Right lobe of liver (tissue), 6 donors: ENCODE measurements at regions of chrX and their contacts with region 1.

Region 1: GRCh38 chrX:12946838-12947544 is 27.9 kb upstream of the TMSB4X start:
- DNase-seq: peak in 2 of 3 donors; percentile 57 to 66
- ATAC-seq: peak; percentile 83 to 91 (median 87)
- H3K4me3 ChIP-seq: no peak overlapping the region
- H3K27ac ChIP-seq: peak overlapping the region in 1 of 3 donors; percentile 1
- H3K4me1 ChIP-seq: peaks cover 0 to 15% (median 6%) of the 10 kb centered on the region in 4 donors
- H3K27me3 ChIP-seq: no peaks in the 10 kb centered on the region
- CTCF ChIP-seq: peak; percentile 94 to 99 (median 96)
- POLR2A ChIP-seq: no peak

Region 2: DNA sequence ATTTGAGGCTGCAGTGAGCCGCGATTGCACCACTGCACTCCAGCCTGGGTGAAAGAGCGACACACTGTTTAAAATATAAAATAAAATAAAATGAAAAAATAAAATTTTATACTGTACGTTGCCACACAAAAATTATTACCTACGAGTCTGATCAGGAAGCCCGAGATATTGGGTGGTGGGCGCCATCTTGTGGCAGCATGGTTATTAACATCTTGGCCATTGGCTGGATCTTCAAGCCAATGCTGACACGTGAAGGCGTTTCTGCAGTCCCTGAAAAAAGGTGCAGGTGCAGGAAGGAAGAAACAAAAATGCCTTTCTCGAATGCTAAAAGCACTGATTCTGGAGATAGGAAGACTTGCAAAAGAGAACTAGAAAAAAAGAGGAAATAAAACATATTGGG is 45.5 kb before region 1 on chrX:
- intact Hi-C with region 1: no loop called
- DNase-seq: peak in 2 of 3 donors; percentile 47 to 62
- ATAC-seq: peak; percentile 72 to 82 (median 76)
- H3K4me3 ChIP-seq: no peak overlapping the region
- H3K27ac ChIP-seq: no peak overlapping the region
- H3K4me1 ChIP-seq: no peaks in the 10 kb centered on the region
- H3K27me3 ChIP-seq: no peaks in the 10 kb centered on the region
- CTCF ChIP-seq: peak; percentile 51 to 80 (median 77)
- POLR2A ChIP-seq: no peak

Region 3: DNA sequence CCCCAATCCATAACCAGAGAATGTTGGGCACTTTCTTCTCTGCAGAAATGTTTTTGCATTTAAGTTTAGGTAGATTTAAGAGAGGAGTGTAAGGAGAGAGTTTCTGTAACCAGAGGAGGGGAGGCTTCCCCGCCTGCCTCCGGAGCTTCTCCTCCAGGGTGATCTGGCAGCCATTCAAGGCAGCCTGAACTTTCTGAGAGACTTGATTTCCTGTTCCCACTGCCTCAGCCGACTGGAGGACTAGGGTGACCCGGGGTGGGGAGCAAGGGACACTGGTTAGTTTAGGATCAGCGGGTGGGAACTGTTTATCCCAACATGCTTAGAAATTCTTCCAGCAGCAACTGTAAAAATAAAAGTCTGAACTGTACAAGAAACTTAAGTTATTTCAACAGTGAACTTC is 82.3 kb after region 1 on chrX:
- intact Hi-C with region 1: no loop called
- DNase-seq: peak; percentile 54 to 59 (median 56)
- ATAC-seq: peak; percentile 64 to 71 (median 68)
- H3K4me3 ChIP-seq: no peak overlapping the region
- H3K27ac ChIP-seq: no peak overlapping the region
- H3K4me1 ChIP-seq: peaks cover 0 to 6% (median 0%) of the 10 kb centered on the region in 4 donors
- H3K27me3 ChIP-seq: no peaks in the 10 kb centered on the region
- CTCF ChIP-seq: no peak
- POLR2A ChIP-seq: no peak

Region 4: DNA sequence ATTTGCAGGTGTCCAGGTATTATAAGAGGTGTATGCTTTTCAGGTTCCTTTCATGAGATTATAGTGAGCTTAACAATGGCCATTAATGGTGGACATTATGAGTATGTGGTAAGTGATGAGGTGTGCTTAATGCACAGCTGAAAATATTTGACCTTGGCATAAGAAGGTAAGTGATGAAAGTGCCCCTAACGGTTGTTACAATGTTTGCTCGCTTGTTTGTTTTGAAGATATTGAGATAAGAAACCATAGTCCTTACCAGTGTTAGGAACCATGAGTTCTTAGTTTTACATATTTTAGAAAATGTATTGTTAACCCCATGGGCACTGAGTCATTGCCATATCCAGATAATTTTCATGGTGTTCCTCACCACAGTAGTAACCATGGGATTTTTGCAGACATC is 375.8 kb after region 1 on chrX:
- intact Hi-C with region 1: no loop called
- DNase-seq: no peak
- ATAC-seq: no peak
- H3K4me3 ChIP-seq: no peak overlapping the region
- H3K27ac ChIP-seq: no peak overlapping the region
- H3K4me1 ChIP-seq: no peaks in the 10 kb centered on the region
- H3K27me3 ChIP-seq: no peaks in the 10 kb centered on the region
- CTCF ChIP-seq: no peak
- POLR2A ChIP-seq: no peak

Region 5: DNA sequence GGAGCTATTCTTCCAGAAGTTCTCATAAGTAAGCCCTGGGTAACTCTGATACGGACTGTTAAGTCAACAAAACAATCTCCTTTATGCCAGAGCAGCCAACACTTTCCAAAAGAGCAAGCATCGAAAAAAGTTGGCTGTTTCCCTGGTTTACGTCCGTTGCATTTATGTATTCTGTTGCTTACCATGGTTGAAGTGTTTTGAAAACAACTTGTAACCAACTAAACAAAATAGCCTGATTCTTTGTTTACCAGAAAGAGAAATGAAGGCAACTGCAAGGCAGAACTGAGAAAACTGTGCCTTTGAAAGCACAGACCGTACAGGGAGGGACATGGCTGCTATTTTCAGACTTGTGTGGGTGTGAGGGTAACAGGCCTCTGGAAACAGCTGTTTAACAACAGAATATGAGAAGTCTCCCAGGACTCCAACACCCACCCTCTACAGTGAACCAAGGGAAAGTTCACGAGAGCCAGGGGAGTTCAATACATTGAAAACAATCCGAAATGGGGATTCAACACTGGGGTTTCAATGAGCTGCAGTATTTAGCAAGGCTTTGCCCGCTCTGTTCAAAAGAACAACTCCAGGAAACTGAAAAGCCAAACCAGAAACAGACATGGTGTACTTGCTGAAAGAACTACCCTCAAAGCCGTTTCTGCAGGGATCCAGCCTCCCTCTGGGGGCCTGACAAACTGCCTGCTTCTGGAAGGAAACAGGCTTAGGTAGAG is 526.6 kb after region 1 on chrX:
- intact Hi-C with region 1: loop called in 1 of 2 experiments (anchors 10 kb)
- DNase-seq: no peak
- ATAC-seq: peak in 1 of 4 donors; percentile 36
- H3K4me3 ChIP-seq: no peak overlapping the region
- H3K27ac ChIP-seq: peak overlapping the region in 1 of 3 donors; percentile 6
- H3K4me1 ChIP-seq: no peaks in the 10 kb centered on the region
- H3K27me3 ChIP-seq: peaks cover 0 to 4% of the 10 kb centered on the region in 2 donors
- CTCF ChIP-seq: no peak
- POLR2A ChIP-seq: no peak

Region 6: DNA sequence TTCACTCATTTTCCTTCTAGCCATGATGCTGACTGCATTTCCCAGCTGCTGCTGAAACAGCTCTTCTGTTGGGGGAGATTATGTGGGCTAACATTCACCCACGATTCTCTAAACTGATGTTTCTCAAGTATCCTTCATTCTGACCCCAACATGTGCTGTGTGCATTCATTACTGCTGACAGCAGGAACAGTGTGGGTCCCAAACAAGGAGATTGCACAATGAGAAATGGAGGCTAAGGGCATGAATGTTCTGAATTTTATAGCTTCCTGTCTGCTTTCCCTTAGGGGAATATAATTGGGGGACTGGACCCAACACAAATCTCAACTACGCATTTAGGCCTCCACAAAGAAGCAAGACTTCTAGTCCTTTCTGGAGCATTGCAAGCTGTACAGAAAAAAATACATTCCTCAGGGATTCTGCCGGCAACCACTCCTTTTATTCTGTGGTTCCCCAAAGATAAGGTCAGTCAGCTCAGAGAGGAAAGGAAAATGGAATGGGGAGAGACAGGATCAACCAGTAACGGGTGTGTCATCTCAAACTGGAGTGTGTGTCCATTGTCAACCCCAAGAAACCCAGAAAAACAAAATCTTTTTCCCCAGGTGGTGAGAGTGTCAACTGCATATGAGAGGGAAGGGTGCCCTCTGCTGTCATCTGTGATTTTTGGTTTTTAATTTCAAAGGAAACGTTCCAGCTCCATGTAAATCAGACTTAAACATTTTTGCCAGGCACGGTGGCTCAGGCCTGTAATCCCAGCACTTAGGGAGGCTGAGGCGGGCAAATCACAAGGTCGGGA is 540.9 kb after region 1 on chrX:
- intact Hi-C with region 1: loop called in 1 of 2 experiments (anchors 5 kb)
- DNase-seq: no peak
- ATAC-seq: peak; percentile 84 to 89 (median 86)
- H3K4me3 ChIP-seq: no peak overlapping the region
- H3K27ac ChIP-seq: peak overlapping the region; percentile 12 to 40 (median 35)
- H3K4me1 ChIP-seq: no peaks in the 10 kb centered on the region
- H3K27me3 ChIP-seq: no peaks in the 10 kb centered on the region
- CTCF ChIP-seq: peak; percentile 55 to 84 (median 64)
- POLR2A ChIP-seq: no peak